ENCODE measurements at regions of chr1 and their contacts with region 1.

Region 1: DNA sequence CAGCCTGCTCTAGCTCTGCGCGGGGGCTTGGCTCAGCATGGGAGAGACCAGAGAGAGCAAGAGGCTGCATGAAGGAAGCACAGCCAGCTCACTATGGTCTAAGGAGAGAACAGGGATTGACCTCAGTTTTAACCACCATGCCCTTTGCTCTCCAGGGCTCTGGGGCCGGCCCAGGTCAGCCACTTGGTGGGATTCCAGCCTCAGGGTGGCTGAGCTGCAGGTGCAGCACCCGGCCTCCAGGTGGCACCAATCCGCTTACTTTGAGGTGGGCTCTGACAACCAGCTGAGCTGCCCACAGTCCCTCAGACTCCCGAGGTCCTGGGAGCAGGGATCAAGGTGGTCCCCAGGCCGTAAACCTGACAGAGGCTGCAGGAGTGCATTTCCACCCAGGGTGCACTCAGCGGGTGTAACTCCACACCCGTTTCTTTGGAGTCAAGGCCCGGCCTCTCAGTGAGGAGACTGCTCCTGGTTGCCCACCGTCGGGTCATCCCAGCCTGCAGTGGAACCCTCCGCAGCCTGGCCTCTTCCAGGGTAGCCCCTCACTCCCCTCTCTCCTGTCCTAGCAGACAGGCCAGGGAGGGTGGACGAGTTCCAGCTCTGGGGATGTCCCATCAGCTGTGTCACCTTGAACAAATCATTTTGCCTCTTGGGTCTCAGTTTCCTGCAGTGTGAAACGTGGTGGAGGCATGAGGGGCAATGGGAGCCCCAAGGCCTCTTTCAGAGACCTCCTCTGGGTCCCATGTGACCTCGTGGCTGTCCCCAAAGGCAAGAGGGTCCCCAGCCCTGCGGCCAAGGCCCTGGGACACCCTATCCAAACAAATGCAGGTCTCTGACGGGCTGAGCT is 607 bp upstream of the LGR6 start:
- DNase-seq: no peak
- H3K4me3 ChIP-seq: no peak overlapping the region
- CTCF ChIP-seq: peak; percentile 90

Region 2: DNA sequence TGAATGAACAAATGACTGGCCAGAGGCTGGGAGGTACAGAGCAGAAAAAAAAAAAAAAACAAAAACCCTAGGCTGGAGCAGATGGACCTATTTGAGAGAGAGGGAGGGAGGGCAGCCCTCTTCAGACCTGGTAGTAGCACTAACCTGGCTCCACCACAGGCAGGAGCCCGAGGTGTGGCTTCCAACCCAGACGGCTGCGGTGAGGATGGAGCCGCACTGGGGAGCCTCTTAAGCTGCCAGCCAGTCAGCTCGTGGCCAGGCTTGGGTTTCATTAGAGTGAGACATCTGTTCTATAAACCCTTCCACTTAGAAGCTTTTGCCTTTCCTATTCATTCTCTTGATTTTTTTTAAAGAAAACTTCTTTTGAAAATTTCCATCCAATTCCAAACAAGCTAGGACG is 17.4 kb after region 1 on chr1:
- CTCF ChIA-PET with region 1: interaction called, 21 read pairs
- POLR2A ChIA-PET with region 1: no interaction called
- DNase-seq: no peak
- H3K4me3 ChIP-seq: no peak overlapping the region
- CTCF ChIP-seq: peak; percentile 3

Region 3: DNA sequence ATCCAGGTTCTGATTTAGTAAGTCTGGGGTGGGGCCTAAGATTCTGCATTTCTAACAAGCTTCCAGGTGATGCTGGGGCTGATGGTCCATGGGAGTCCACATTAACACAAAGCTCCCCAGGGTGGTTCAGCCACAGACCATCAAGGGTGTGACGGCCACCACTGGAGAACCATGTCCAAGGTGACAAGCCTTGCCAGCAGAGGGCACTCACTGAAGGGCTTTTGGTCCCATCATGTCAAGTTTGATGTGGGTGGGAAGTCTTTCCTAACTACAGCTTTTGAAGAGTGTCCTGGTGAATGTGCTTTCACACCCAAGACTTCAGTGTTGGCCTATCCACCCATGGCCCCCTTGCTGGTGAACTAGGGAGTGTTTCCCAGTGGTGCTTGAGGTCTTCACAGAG is 81.6 kb after region 1 on chr1:
- CTCF ChIA-PET with region 1: interaction called, 12 read pairs
- POLR2A ChIA-PET with region 1: no interaction called
- DNase-seq: no peak
- H3K4me3 ChIP-seq: no peak overlapping the region
- CTCF ChIP-seq: peak; percentile 66

Region 4: DNA sequence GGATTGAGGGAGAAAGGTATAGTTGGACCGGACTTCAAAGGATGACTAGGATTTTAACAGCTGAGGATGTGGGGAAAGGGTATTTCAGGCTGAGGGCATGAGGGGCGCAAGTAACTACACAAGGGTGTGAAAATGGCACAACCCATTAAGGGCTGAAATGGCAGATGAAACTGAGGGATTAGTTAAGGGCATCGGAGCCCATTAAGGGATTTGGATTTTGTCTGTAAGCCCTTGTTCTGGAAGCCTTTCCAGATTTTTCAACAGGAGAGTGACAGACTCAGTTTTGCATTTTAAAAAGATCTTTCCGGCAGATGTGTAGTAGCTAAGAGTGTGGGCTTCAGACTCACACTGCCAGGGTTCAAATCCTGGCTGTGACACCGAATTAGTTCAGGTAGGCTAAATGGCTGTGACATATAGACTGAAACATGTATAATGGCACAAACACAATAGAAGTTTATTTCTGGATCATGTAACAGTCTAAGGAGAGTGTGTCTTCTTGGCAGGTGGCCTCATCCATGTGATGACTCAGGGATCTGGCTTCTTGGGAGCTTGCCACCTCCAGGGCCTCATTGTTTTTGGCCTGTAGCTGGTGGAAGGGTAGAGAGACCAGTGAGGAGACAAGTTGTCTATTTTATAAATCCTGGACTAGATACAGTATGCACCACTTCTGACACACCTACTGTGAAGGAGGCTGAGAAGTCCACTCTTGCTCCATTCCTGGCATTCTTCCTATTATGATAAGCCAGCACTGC is 99.1 kb after region 1 on chr1:
- CTCF ChIA-PET with region 1: interaction called, 24 read pairs
- POLR2A ChIA-PET with region 1: no interaction called
- DNase-seq: peak; percentile 23
- H3K4me3 ChIP-seq: no peak overlapping the region
- CTCF ChIP-seq: no peak

Region 5: GRCh38 chr1:202315576-202316168 is 122.7 kb after region 1 on chr1:
- CTCF ChIA-PET with region 1: interaction called, 479 read pairs
- POLR2A ChIA-PET with region 1: no interaction called
- DNase-seq: no peak
- H3K4me3 ChIP-seq: no peak overlapping the region
- CTCF ChIP-seq: peak; percentile 96

Region 6: DNA sequence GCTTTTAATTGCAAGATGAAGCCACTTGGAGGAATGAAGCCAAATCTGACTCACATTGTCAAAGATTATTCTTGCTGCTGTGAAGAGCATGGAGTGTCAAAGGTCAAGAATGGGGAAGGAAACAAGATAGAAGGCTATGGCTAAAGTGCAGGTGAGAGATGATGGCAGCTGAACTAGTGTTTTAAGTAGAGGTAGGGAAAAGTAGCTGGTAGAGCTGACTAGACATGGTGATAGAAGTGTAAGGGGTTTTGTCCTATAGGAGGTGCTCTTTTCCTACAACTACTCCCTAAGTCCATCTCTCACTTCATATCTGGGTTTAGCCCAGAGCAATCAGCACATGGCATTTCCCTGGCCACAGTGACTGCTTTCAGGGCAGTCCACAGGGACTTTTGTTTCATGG is 136.9 kb after region 1 on chr1:
- CTCF ChIA-PET with region 1: interaction called, 479 read pairs
- POLR2A ChIA-PET with region 1: no interaction called
- DNase-seq: no peak
- H3K4me3 ChIP-seq: no peak overlapping the region
- CTCF ChIP-seq: no peak

Measured in AG04449 (cell line).